ENCODE measurements at regions of chr12 and their contacts with region 1.

Region 1: DNA sequence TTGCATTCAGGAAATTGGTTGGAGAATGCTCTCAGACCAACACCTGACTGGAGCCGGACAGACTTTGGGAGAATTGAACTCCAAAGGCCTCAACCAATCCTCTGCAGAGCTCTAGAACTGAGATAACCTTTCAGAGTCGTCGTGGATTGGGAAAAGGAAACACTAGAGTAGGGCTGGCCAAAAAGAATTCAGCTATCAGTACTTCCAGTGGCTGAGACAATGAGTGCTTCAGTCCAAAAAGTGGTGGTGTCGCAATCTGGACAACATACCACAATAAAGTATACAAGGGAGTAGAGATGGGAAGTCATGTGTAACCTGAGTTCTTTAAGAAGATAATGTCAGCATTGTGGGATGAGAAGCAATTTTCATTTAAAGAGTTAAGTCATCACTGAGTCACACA is 377.1 kb downstream of the SLC16A7 start:
- DNase-seq: no peak
- H3K4me3 ChIP-seq: no peak overlapping the region
- H3K27ac ChIP-seq: no peak overlapping the region
- H3K4me1 ChIP-seq: no peaks in the 10 kb centered on the region
- CTCF ChIP-seq: no peak

Region 2: DNA sequence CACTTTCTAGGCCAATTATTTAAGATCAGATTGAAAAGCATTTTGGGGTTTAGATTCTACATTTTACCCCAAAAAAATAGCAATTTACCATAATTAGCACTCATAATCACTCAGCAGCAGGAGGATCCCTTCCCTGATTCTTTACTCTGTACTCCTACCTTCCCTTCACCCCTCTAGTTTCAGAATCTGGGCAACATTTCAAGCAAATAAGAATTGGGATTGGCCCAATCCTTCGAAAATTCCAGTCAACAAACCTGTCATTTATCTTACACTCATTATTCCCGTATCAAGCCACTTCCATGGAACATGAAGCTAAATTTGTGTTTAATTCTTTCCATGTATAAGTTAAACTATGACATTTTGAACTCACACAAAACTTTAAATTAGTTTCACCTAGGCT is 1938.2 kb after region 1 on chr12:
- CTCF ChIA-PET with region 1: no interaction called
- POLR2A ChIA-PET with region 1: no interaction called
- intact Hi-C with region 1: loop called (anchors 5 kb)
- DNase-seq: no peak
- H3K4me3 ChIP-seq: no peak overlapping the region
- H3K27ac ChIP-seq: no peak overlapping the region
- H3K4me1 ChIP-seq: no peaks in the 10 kb centered on the region
- CTCF ChIP-seq: no peak

Measured in OCI-LY7 (cell line).